Panc1 (cell line): ENCODE measurements at regions of chr12 and their contacts with region 1.

Region 1: GRCh38 chr12:129119537-129119936 is 266.3 kb downstream of the GLT1D1 start:
- DNase-seq: no peak
- ATAC-seq: no peak
- H3K4me3 ChIP-seq: no peak overlapping the region
- H3K27ac ChIP-seq: no peak overlapping the region
- H3K4me1 ChIP-seq: no peaks in the 10 kb centered on the region
- H3K27me3 ChIP-seq: no peaks in the 10 kb centered on the region
- CTCF ChIP-seq: no peak

Region 2: DNA sequence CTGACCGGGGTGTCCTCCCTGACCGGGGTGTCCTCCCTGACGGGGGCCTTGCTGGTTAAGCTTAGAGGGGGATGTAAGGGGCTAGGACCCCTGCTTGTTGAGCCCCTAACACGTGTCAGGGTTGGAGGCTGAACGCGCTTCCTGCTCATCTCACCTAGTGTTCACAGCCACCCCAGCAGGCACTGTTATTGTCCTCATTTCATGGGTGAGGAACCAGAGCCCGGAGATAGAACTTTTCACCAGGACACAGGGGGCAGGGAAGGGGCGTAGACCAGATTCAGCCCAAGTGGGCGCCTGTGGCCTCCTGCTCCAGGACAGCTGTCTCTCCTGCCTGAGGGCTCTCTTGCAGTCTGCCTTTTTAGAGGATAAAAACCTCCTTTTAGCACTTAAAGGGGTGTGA is 30.0 kb before region 1 on chr12:
- CTCF ChIA-PET with region 1: no interaction called
- POLR2A ChIA-PET with region 1: no interaction called
- in situ Hi-C with region 1: no loop called
- intact Hi-C with region 1: no loop called
- DNase-seq: no peak
- ATAC-seq: no peak
- H3K4me3 ChIP-seq: no peak overlapping the region
- H3K27ac ChIP-seq: no peak overlapping the region
- H3K4me1 ChIP-seq: no peaks in the 10 kb centered on the region
- H3K27me3 ChIP-seq: no peaks in the 10 kb centered on the region
- CTCF ChIP-seq: no peak

Region 3: GRCh38 chr12:129109174-129110001 is 10.1 kb before region 1 on chr12:
- CTCF ChIA-PET with region 1: no interaction called
- POLR2A ChIA-PET with region 1: no interaction called
- in situ Hi-C with region 1: no loop called
- intact Hi-C with region 1: no loop called
- DNase-seq: no peak
- ATAC-seq: no peak
- H3K4me3 ChIP-seq: no peak overlapping the region
- H3K27ac ChIP-seq: no peak overlapping the region
- H3K4me1 ChIP-seq: no peaks in the 10 kb centered on the region
- H3K27me3 ChIP-seq: no peaks in the 10 kb centered on the region; the same call in 1 of the 2 replicates
- CTCF ChIP-seq: no peak

Region 4: DNA sequence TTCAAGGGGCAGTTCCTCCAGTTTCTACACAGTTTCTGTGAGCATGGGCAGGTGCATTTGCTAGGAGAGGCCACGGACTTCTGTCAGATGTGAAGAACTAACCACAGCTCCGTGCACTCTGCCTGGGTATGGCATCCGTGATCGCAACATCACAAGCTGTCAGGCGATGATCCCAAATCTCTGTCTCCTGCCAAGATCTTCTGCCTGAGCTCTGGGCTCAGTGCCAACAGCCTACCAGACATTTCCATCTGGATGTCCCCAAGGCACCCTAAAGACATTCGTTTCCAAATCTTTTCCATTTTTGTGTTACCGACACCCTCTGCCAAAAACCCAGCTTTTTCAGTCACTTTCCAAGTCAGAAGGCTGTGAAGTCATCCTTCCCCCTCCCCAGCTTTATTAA is 25.8 kb after region 1 on chr12:
- CTCF ChIA-PET with region 1: no interaction called
- POLR2A ChIA-PET with region 1: no interaction called
- in situ Hi-C with region 1: no loop called
- intact Hi-C with region 1: loop called (anchors 1 kb)
- DNase-seq: no peak
- ATAC-seq: no peak
- H3K4me3 ChIP-seq: no peak overlapping the region
- H3K27ac ChIP-seq: no peak overlapping the region
- H3K4me1 ChIP-seq: no peaks in the 10 kb centered on the region
- H3K27me3 ChIP-seq: no peaks in the 10 kb centered on the region
- CTCF ChIP-seq: no peak

Region 5: DNA sequence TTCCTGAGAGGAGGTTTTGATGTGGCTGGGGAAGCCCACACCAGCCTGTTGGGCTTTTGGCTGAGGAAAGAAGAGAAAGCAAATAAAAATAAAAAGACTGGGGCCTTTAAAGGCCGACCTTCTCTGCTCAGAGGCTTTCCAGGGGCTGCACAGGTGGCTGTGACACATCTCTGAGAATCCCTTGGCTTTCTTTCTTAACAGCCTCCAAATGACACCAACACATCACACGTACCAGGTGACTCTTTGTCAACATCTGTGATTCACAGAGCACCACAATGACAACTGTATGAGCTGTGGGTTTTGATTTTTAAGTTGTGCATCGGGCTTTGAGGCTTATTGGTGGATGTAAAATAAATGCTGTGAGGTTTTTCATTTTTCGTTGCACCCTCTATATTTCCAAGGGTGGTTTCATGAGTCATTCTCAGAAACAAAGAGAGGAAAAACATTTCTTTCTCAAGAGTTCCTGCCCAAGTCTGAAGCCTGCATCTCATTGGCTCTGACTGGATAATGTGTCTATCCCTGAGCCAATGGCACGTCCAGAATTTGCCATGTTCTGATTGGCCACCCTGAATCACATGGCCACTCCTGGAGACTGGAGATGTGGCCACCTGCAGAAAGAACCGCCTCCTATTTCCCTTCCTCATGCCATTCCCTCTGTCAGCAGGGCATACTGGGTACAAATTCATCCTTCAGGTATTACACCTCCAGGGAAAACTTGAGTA is 82.7 kb after region 1 on chr12:
- CTCF ChIA-PET with region 1: no interaction called
- POLR2A ChIA-PET with region 1: no interaction called
- in situ Hi-C with region 1: no loop called
- intact Hi-C with region 1: no loop called
- DNase-seq: no peak
- ATAC-seq: no peak
- H3K4me3 ChIP-seq: no peak overlapping the region
- H3K27ac ChIP-seq: no peak overlapping the region
- H3K4me1 ChIP-seq: no peaks in the 10 kb centered on the region
- H3K27me3 ChIP-seq: no peaks in the 10 kb centered on the region
- CTCF ChIP-seq: no peak

Region 6: GRCh38 chr12:129409281-129409680 is 289.7 kb after region 1 on chr12:
- CTCF ChIA-PET with region 1: no interaction called
- POLR2A ChIA-PET with region 1: no interaction called
- in situ Hi-C with region 1: no loop called
- intact Hi-C with region 1: no loop called
- DNase-seq: no peak
- ATAC-seq: no peak
- H3K4me3 ChIP-seq: no peak overlapping the region
- H3K27ac ChIP-seq: no peak overlapping the region
- H3K4me1 ChIP-seq: no peaks in the 10 kb centered on the region
- H3K27me3 ChIP-seq: no peaks in the 10 kb centered on the region
- CTCF ChIP-seq: no peak